ENCODE measurements at regions of chr5 and their contacts with region 1.

Region 1: DNA sequence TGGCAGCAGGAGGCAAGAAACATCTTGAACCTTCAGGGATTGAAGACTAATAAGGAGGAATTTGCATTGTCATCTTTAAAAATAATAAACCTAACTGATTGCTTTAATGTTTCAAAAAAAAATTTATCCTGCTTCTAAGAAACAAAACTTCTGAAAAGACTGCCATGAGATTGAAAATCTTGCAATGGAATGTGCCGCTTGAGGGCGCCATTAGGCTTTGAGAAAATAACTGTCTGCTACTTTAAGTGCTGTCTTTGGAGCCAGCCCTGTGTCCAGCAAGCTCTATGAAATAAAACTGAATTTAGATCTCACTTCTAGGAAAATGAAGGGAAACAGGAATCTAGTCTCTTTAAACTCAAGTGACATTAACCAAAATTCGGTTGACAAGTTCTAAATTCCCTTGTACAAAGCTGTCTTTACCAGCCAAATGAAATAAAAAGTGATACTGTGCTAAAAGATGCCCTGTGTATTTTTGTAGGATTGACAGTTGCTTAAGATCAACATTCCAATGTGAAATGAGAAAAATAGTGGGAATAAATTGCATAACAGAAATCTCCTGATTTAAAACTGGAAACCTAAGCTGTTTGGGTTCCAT is 79.4 kb downstream of the ESM1 start:
- DNase-seq: peak; percentile 40 to 66 (median 50)
- H3K4me3 ChIP-seq: no peak overlapping the region
- H3K4me3 Mint-ChIP-seq: no peak overlapping the region
- H3K27ac ChIP-seq: no peak overlapping the region
- H3K27ac Mint-ChIP-seq: no peak overlapping the region
- H3K4me1 ChIP-seq: peaks cover 9% of the 10 kb centered on the region
- H3K4me1 Mint-ChIP-seq: peaks cover 9 to 12% (median 11%) of the 10 kb centered on the region in 3 donors
- H3K27me3 ChIP-seq: no peaks in the 10 kb centered on the region
- H3K27me3 Mint-ChIP-seq: peaks cover 0 to 4% of the 10 kb centered on the region in 2 donors

Region 2: GRCh38 chr5:54799645-54800044 is 106.4 kb before region 1 on chr5:
- CTCF ChIA-PET with region 1: no interaction called
- POLR2A ChIA-PET with region 1: no interaction called
- DNase-seq: no peak
- H3K4me3 ChIP-seq: no peak overlapping the region
- H3K4me3 Mint-ChIP-seq: no peak overlapping the region
- H3K27ac ChIP-seq: no peak overlapping the region
- H3K27ac Mint-ChIP-seq: no peak overlapping the region
- H3K4me1 ChIP-seq: peaks cover 3% of the 10 kb centered on the region
- H3K4me1 Mint-ChIP-seq: peaks cover 4 to 6% (median 4%) of the 10 kb centered on the region in 3 donors
- H3K27me3 ChIP-seq: no peaks in the 10 kb centered on the region
- H3K27me3 Mint-ChIP-seq: peaks cover 0 to 4% of the 10 kb centered on the region in 2 donors

Region 3: GRCh38 chr5:54881286-54882035 is 24.6 kb before region 1 on chr5:
- CTCF ChIA-PET with region 1: no interaction called
- POLR2A ChIA-PET with region 1: no interaction called
- DNase-seq: peak in 2 of 5 donors; percentile 22 to 55
- H3K4me3 ChIP-seq: no peak overlapping the region
- H3K4me3 Mint-ChIP-seq: no peak overlapping the region
- H3K27ac ChIP-seq: no peak overlapping the region
- H3K27ac Mint-ChIP-seq: peak overlapping the region in 4 of 8 donors; percentile 6 to 55 (median 20)
- H3K4me1 ChIP-seq: no peaks in the 10 kb centered on the region
- H3K4me1 Mint-ChIP-seq: peaks cover 11 to 23% (median 16%) of the 10 kb centered on the region in 3 donors
- H3K27me3 ChIP-seq: peaks cover 8% of the 10 kb centered on the region
- H3K27me3 Mint-ChIP-seq: peaks cover 25 to 59% of the 10 kb centered on the region in 2 donors

Region 4: DNA sequence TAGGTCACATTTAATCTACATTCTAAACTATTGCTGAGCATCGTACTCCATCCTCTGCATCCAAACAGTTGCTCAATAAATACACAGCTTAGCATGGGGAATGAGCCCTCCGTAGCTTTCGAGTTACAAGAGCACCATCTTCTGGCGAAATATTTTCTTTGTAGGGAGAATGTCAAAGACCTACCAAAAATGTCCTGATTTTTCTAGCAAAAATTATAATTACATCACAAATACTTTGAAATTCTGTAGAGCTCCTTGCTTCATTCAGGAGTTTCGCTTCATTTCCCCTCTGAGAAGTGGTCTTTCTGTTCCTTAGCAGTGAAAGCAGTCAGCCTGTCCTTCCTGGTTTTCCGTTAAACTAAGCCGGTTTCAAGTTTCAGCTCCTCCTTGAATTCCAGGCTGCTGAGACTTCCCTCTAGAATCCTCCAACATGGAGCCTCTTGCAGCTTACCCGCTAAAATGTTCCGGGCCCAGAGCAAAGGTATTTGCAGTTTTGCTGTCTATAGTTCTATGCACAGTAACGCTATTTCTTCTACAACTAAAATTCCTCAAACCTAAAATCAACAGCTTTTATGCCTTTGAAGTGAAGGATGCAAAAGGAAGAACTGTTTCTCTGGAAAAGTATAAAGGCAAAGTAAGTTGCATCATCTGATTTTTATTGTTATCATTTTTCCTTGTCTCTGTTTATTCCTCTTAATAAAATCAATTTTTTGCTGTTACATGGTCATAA is 253.9 kb after region 1 on chr5 and contains the start of gene GPX8:
- CTCF ChIA-PET with region 1: interaction called, 101 read pairs
- POLR2A ChIA-PET with region 1: interaction called, 3 read pairs
- DNase-seq: peak in 2 of 5 donors; percentile 46 to 51
- H3K4me3 ChIP-seq: no peak within 1 kb of the TSS
- H3K4me3 Mint-ChIP-seq: no peak within 1 kb of the TSS
- H3K27ac ChIP-seq: no peak within 1 kb of the TSS
- H3K27ac Mint-ChIP-seq: no peak within 1 kb of the TSS
- H3K4me1 ChIP-seq: no peaks in the 10 kb centered on the region
- H3K4me1 Mint-ChIP-seq: no peaks in the 10 kb centered on the region
- H3K27me3 ChIP-seq: peaks cover 3% of the 10 kb centered on the region
- H3K27me3 Mint-ChIP-seq: peaks cover 6 to 45% of the 10 kb centered on the region in 2 donors
- total RNA-seq, gene GPX8: not detected

Measured in CD8-positive, alpha-beta memory T cell (primary cell).